Cardiac septum (tissue), 1 donor: ENCODE measurements at regions of chr10 and their contacts with region 1.

Region 1: DNA sequence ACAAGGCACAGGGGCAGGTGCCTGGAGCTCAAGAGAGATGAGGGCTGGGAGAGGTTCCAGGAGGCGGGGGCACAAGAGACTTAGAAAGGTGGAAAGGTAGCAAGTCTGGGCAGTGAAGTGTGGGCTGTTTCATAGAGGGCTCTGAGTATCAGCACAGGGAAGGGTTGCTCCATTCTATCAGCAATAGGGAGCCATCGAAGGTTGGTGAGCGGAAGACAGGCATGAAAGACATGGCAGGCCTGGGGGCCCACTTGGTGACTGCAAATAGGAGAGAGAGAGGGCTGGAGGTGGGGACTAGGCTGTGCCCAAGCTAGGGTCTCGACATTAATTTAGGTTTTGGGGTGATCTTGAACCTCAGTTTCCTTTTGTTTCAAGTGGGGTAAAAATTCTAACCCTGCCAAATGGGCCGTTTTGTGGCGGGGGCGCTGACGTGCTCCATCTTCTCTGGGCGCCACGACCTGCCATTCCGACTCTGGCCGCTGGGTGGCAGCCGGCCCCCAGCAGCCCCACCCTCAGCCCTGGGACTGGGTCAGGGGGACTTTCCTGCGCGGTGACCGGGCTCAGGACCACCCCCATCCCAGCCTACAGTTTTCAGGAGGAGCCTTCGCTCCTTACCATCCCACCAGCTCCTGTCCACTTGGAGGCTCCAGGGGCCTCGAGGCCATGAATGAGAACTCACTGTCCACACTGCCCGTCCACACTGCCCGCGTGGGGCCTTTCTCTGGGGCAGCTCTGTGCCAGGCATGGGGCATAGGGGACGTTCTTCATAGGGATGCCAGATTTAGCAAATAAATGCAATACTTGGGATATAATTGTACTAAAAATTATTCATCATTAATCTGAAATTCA is 37.2 kb upstream of the PCBD1 start:
- DNase-seq: no peak

Region 2: GRCh38 chr10:70466951-70467350 is 458.6 kb before region 1 on chr10:
- intact Hi-C with region 1: no loop called
- DNase-seq: no peak

Region 3: DNA sequence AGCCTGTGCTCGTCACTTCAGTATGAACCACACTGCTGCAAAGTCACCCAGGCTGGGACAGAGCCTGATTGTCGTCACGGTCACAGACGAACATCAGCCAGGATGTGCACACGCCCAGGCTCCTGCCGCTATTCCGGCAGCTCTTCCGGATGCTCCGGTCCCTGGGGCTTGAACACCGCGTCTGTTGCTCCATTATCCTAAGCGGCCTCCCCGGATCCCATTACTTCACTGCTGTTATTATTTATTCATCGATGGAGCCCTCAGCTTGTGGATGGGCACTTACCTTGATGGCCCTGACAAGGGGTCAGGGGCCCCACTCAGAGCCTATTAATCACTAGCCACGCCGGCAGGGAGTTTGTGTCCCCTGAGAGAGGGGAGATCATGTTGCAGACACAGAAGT is 83.5 kb after region 1 on chr10:
- intact Hi-C with region 1: loop called (anchors 5 kb)
- DNase-seq: no peak

Region 4: GRCh38 chr10:71285180-71285545 is 359.6 kb after region 1 on chr10:
- intact Hi-C with region 1: loop called (anchors 2 kb)
- DNase-seq: no peak